Thyroid gland (tissue), 4 donors: ENCODE measurements at regions of chr17 and their contacts with region 1.

Region 1: GRCh38 chr17:81959362-81960129 is 1.4 kb downstream of the NOTUM start:
- DNase-seq: peak; percentile 64 to 73
- H3K4me3 ChIP-seq: peak overlapping the region in 1 of 3 donors; percentile 24
- H3K27ac ChIP-seq: no peak overlapping the region
- H3K4me1 ChIP-seq: peaks cover 6 to 23% of the 10 kb centered on the region in 2 donors
- H3K27me3 ChIP-seq: peaks cover 25% of the 10 kb centered on the region
- CTCF ChIP-seq: peak in 4 of 6 experiments; percentile 50 to 99 (median 98)
- POLR2A ChIP-seq: no peak

Region 2: DNA sequence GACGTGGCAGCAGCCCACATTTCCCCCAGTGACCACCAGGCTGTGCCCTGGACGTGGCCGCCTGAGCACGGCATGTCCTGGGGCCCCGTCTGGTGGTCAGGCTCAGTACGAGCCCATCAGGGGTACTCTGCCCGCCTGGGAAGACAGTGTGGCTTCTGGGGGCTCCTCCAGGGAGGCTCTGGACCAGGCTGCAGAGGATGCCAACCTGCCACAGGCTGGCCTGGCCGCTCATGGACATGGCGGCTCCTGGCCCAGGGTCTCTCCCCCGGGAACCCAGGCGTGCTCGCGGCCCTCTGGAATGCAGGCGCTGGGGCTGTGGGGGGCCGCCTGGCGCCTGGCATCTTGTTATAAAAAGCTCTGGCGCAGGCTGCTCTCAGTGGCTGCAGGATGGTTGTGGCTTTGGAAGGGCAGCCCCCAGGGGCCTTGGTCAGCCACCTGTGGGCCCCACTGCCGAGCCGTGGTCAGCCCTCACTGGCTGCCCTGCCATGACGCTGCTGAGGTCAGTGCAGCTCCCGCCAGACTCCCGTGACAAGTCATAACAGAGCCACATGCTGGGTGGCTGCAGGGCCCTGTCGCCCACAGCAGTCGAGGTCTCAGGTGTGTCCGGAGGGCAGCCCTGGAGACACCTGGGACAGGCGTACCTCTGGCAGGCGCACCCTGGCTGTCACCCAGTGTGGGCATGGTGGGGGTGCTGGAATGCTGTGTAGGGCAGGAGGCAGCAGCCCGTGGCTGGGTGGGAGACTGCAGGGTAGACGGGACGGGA is 48.1 kb after region 1 on chr17:
- intact Hi-C with region 1: no loop called
- DNase-seq: no peak
- H3K4me3 ChIP-seq: no peak overlapping the region
- H3K27ac ChIP-seq: no peak overlapping the region
- H3K4me1 ChIP-seq: peaks cover 0 to 13% of the 10 kb centered on the region in 2 donors
- H3K27me3 ChIP-seq: no peaks in the 10 kb centered on the region
- CTCF ChIP-seq: no peak
- POLR2A ChIP-seq: no peak

Region 3: DNA sequence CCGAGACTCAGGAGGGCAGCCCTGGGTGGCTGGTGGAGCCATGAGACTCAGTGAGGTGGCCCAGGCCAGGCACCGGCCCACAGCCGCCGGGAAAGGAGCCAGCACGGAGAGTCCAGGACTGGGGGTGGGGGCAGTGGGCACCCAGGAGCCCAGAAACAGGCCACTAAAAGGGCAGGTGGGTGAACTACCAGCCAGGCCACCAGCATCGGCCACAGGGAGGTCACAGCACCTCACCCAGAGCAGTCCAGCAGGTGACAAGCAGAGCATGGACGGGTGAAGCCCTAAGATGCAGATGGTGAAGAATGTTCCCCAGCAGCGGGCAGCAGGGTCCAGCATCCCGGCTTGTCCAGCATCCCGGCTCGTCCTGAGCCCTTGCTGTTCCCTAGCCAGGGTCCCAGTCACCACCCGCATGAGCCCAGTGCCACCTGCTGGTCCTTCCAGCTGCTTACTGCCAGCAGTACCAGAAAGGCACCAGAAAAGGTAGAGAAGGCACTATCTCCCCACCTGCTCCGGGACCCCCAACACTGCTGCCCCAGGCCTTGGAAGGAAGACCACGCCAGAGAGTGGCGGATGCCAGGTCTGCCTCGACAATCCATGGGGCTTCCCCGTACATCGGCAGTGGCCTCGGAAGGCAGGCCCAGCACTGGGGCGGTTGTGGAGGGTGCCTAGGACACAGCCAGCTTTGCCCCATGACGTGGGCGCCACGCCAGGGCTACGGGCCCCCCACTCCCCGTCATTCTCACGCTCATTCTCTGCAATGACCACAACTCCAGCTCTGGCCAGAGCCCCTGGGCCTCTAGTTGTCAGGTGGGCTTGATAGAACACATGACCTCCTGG is 61.6 kb after region 1 on chr17:
- intact Hi-C with region 1: loop called (anchors 2 kb)
- DNase-seq: peak; percentile 82 to 83
- H3K4me3 ChIP-seq: no peak overlapping the region
- H3K27ac ChIP-seq: no peak overlapping the region
- H3K4me1 ChIP-seq: peaks cover 23 to 24% of the 10 kb centered on the region in 2 donors
- H3K27me3 ChIP-seq: no peaks in the 10 kb centered on the region
- CTCF ChIP-seq: peak; percentile 19 to 89 (median 74)
- POLR2A ChIP-seq: no peak

Region 4: GRCh38 chr17:82051776-82052637 is 92.5 kb after region 1 on chr17 and contains the starts of genes GPS1 and RFNG:
- intact Hi-C with region 1: no loop called
- DNase-seq: peak; percentile 78 to 80
- H3K4me3 ChIP-seq: peak within 1 kb of the TSS; percentile 50 to 85 (median 64)
- H3K27ac ChIP-seq: peak within 1 kb of the TSS in 1 of 3 donors; percentile 18
- H3K4me1 ChIP-seq: peaks cover 18 to 19% of the 10 kb centered on the region in 2 donors
- H3K27me3 ChIP-seq: no peaks in the 10 kb centered on the region
- CTCF ChIP-seq: no peak
- POLR2A ChIP-seq: peak in 1 of 2 donors; percentile 63
- total RNA-seq, gene GPS1: 80.1 to 164 (median 102) TPM
- total RNA-seq, gene RFNG: 36.0 to 49.0 (median 38.3) TPM